Activated B cell treated with CpG ODN at 0.5 μM for 24 hours (primary cell): ENCODE measurements at regions of chr6 and their contacts with region 1.

Region 1: GRCh38 chr6:131199568-131200272 is 64.5 kb downstream of the AKAP7 start:
- DNase-seq: peak; percentile 44
- ATAC-seq: peak; percentile 100
- H3K4me3 Mint-ChIP-seq: peak overlapping the region; percentile 72
- H3K27ac Mint-ChIP-seq: peak overlapping the region; percentile 87
- H3K4me1 Mint-ChIP-seq: peaks cover 36% of the 10 kb centered on the region
- H3K27me3 Mint-ChIP-seq: no peaks in the 10 kb centered on the region
- CTCF ChIP-seq: peak; percentile 16

Region 2: GRCh38 chr6:131101911-131102680 is 97.6 kb before region 1 on chr6:
- CTCF ChIA-PET with region 1: no interaction called
- POLR2A ChIA-PET with region 1: no interaction called
- intact Hi-C with region 1: no loop called
- DNase-seq: no peak
- ATAC-seq: no peak
- H3K4me3 Mint-ChIP-seq: no peak overlapping the region
- H3K27ac Mint-ChIP-seq: no peak overlapping the region
- H3K4me1 Mint-ChIP-seq: peaks cover 3% of the 10 kb centered on the region
- H3K27me3 Mint-ChIP-seq: no peaks in the 10 kb centered on the region
- CTCF ChIP-seq: no peak

Region 3: DNA sequence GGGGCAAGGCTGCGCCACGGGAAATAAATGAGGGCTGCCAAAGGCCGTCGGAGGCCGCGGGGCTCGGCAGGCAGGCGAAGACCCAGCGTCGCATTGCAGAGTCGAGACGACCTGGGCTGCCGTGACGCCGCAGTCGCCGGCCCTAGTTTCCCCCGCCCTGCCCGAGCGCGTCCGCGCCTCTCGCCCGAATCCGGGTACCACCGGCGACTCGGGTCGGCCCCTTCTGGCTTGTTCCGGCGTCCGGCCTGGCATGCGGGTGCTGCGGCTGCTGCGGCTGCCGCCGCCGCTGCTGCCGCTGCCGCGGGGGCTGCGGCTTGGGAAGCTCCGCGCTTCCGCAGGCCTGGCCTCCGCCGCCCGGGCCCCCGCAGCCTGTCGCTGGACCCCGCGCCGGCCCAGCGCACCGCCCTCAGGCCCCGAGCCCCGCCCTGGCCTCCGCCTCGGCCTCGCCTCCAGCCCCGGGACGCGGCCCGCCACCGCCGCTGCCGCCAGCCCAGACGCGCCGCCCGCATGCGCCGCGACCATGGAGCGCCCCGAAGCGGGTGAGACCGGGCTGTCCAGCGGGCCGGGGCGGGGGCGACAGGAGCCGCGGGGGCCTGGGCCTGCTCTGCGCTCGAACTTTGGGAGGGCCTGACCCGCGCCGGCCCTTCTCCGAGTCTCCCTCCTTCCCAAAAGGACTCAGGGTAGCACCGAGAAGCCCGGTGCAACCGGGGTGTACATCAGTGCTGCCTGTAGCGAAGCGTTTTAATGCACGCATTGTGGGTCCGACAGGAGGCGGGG is 64.3 kb before region 1 on chr6 and contains the start of gene AKAP7:
- CTCF ChIA-PET with region 1: no interaction called
- POLR2A ChIA-PET with region 1: no interaction called
- intact Hi-C with region 1: loop called (anchors 5 kb)
- DNase-seq: peak; percentile 68
- ATAC-seq: peak; percentile 76
- H3K4me3 Mint-ChIP-seq: peak within 1 kb of the TSS; percentile 96
- H3K27ac Mint-ChIP-seq: peak within 1 kb of the TSS; percentile 95
- H3K4me1 Mint-ChIP-seq: peaks cover 26% of the 10 kb centered on the region
- H3K27me3 Mint-ChIP-seq: no peaks in the 10 kb centered on the region
- CTCF ChIP-seq: no peak
- total RNA-seq, gene AKAP7: 4.1 TPM in 2 replicates

Region 4: GRCh38 chr6:131167773-131168172 is 31.9 kb before region 1 on chr6:
- CTCF ChIA-PET with region 1: no interaction called
- POLR2A ChIA-PET with region 1: no interaction called
- intact Hi-C with region 1: no loop called
- DNase-seq: no peak
- ATAC-seq: no peak
- H3K4me3 Mint-ChIP-seq: no peak overlapping the region
- H3K27ac Mint-ChIP-seq: no peak overlapping the region
- H3K4me1 Mint-ChIP-seq: no peaks in the 10 kb centered on the region
- H3K27me3 Mint-ChIP-seq: no peaks in the 10 kb centered on the region
- CTCF ChIP-seq: no peak

Region 5: GRCh38 chr6:131532580-131533039 is 332.9 kb after region 1 on chr6:
- CTCF ChIA-PET with region 1: interaction called, 46 read pairs
- POLR2A ChIA-PET with region 1: no interaction called
- intact Hi-C with region 1: loop called (anchors 1 kb)
- DNase-seq: no peak
- ATAC-seq: peak; percentile 47
- H3K4me3 Mint-ChIP-seq: no peak overlapping the region
- H3K27ac Mint-ChIP-seq: no peak overlapping the region
- H3K4me1 Mint-ChIP-seq: peaks cover 10% of the 10 kb centered on the region
- H3K27me3 Mint-ChIP-seq: no peaks in the 10 kb centered on the region
- CTCF ChIP-seq: no peak

Region 6: GRCh38 chr6:131597446-131597845 is 397.7 kb after region 1 on chr6:
- CTCF ChIA-PET with region 1: interaction called, 3 read pairs
- POLR2A ChIA-PET with region 1: no interaction called
- intact Hi-C with region 1: loop called (anchors 1 kb)
- DNase-seq: no peak
- ATAC-seq: no peak
- H3K4me3 Mint-ChIP-seq: no peak overlapping the region
- H3K27ac Mint-ChIP-seq: no peak overlapping the region
- H3K4me1 Mint-ChIP-seq: no peaks in the 10 kb centered on the region
- H3K27me3 Mint-ChIP-seq: no peaks in the 10 kb centered on the region
- CTCF ChIP-seq: no peak